Adrenal gland (tissue), 19 donors: ENCODE measurements at regions of chr16 and their contacts with region 1.

Region 1: DNA sequence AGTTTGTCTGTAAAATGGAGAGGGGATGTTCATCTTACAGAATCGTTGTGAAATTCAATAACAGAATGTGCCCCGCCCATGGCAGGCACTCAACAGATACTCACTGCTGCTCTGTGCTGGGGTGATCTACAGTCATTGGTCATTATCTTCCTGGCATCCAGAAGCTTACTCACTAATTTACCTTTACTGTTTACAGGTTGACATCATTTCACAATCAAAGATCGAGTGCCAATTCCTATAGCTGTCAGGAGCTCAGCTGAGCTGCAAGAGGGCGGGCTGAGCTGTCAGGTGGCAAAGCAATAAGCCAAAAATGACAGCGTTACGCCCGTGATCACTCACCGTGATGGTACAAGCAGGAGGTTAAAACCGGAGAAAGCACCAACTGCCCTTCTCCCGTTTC is 51.2 kb downstream of the LITAF start:
- DNase-seq: no peak
- H3K4me3 ChIP-seq: no peak overlapping the region
- H3K27ac ChIP-seq: no peak overlapping the region
- H3K4me1 ChIP-seq: no peaks in the 10 kb centered on the region
- H3K27me3 ChIP-seq: no peaks in the 10 kb centered on the region
- CTCF ChIP-seq: no peak
- POLR2A ChIP-seq: no peak

Region 2: DNA sequence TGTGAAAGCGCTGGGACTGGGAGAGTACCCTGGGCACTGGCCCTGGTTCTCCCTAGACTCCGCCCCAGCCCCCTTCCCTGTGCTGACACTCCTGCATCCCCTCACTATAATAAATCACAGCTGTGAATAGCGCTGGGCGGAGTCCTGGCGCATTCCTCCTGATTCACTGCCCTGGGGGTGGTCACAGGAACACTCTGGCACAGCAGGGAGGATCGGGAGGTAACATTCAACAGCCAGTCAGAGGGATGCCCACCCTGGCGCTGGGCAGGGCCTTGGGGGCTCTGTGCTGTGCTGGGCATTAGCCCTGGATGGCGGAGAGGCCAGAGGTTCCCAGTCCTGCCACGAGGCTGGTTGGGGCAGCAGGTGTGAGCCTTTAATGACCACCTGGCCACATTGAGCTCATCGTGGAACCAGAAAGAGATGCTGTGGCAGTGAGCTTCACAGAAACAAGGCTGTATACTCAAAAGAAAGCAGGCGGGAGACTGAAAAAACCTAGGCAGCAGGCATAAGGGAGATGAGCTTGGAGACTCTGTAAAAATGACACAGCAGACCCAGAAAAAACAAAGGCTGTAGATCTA is 144.5 kb before region 1 on chr16:
- intact Hi-C with region 1: loop called in 1 of 2 experiments (anchors 5 kb)
- DNase-seq: no peak
- H3K4me3 ChIP-seq: no peak overlapping the region
- H3K27ac ChIP-seq: no peak overlapping the region
- H3K4me1 ChIP-seq: no peaks in the 10 kb centered on the region
- H3K27me3 ChIP-seq: no peaks in the 10 kb centered on the region
- CTCF ChIP-seq: no peak
- POLR2A ChIP-seq: no peak

Region 3: DNA sequence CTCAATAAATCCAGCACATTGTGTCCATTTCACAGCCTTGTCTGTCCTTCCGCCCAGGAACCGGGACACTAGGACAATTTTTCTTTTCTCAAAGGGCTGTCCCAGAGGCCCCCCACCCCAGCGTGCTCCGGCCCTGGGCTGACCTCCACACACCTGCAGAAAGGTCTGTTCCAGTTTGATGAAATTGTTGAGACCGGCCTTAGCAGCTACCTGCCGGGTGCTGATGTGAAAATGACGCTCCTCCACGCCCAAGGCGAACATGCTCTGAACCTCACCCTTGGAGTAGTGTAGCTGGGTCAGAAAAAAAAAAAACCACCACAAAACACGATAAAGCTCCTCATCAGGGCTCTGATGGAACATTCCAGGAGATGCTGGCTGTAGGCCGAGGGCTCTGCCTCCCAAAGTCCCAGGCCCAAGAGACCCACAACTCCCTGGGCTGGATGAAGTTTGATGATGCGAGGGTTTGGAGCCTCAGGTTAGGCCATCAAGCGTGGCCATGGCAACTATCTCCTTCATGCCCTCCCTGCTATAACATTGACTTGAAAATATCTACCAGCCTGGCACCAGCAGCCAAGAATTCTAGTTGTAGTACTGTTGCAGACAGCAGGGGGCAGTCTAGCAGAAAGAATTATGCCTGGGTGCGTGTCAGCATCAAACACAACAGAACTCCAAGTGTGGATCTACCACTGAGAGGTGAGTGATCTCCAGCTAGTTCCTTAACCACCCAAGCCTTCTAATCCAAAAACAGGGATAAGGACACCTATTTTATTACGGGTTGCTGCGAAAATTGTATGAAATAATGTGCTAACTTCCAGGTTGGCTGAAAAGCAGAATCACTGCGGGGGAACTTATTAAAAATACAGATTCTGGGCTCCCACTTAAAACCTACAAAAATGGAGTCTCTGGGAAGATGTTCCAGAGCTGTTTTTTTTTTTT is 128.2 kb before region 1 on chr16:
- intact Hi-C with region 1: loop called in 1 of 2 experiments (anchors 5 kb)
- DNase-seq: peak; percentile 55 to 90 (median 72)
- H3K4me3 ChIP-seq: no peak overlapping the region
- H3K27ac ChIP-seq: no peak overlapping the region
- H3K4me1 ChIP-seq: peaks cover 0 to 5% of the 10 kb centered on the region in 2 donors
- H3K27me3 ChIP-seq: no peaks in the 10 kb centered on the region
- CTCF ChIP-seq: peak; percentile 66 to 86 (median 80)
- POLR2A ChIP-seq: no peak

Region 4: DNA sequence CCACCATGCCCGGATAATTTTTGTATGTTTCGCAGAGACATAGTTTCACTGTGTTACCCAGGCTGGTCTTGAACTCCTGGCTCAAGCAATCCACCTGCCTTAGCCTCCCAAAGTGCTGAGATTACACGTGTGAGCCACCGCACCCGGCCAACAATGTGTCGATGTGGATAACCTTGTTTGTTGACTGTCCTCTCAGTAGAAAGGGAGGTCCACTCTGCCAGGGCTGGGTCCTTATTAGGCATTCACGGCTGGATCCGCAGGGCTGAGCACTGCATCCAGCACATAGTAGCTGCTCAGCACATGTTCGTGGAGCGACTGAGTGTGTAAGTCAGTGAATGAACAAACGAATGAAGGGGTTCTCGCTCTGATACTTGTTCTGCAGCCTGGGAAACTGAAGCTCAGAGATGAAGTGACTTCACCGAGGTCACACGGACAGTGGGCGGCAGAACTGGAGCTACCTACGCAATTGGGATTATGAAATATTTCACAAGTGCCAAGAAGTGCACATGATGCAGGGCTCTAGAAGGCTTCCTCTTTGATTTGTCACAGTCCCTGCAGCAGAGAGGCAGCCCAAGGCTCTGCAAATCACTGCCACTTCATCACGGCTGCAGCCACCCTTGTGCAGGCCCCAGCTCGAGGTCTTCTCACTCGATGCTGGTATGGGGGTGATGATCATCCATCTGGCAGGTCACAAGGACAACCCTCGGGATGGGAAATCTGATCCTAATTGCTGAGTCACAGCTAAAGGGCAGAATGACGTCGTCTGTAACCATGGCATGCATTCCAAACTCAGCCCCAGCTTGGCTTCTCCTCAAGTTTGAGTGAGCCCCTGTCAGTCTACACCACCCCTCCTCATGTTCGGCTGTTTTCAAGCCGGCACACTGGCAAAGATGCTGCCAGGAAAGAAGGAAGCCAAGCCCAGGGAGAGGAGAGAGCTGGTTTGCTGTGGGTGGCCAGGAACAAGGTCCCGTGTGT is 104.7 kb after region 1 on chr16:
- intact Hi-C with region 1: loop called in 1 of 2 experiments (anchors 2 kb)
- DNase-seq: peak; percentile 88 to 98 (median 96)
- H3K4me3 ChIP-seq: no peak overlapping the region
- H3K27ac ChIP-seq: peak overlapping the region; percentile 77 to 96 (median 90)
- H3K4me1 ChIP-seq: peaks cover 10 to 17% of the 10 kb centered on the region in 2 donors
- H3K27me3 ChIP-seq: no peaks in the 10 kb centered on the region
- CTCF ChIP-seq: no peak
- POLR2A ChIP-seq: peak in 1 of 2 donors; percentile 81

Region 5: DNA sequence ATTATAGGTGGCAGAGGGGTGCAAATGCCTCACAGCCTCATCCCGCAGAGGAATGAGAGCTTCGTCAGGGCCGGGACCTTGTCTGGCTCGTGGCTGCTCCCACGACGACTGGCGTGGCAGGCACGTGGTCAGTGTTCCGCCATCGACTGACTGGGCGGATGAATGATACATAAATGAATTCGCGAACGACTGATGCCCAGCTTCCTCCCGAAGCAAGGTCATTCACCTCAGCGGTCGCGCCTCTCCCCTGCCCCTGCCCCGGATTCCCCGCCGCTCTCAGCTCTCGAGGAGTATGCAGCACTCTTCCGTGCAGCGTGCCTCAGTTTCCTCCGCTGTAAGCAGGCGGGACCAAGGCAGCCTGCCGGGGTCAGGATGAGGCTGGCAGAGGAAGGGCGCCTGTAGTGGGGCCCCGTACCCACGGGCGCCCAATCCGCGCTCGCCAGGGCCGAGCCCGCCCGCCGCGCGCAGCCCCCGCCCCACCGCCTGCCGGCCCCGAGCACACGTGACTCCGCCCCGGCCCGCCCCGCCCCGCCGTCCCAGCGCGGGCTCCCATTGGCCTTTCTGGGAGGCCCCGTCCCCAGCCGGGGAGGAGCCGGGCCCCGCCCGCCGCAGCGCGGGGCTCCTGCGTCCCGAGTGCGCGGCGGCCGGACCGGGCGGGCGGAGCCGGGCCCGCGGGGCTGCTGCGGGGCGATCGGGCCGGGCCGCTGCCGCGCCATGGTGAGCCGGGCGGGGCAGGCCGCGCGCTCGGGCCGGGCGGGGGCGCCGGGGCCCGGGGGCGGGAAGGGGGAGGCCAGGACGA is 132.6 kb after region 1 on chr16 and contains the start of gene SNN:
- intact Hi-C with region 1: no loop called
- DNase-seq: peak; percentile 85 to 93 (median 89)
- H3K4me3 ChIP-seq: peak within 1 kb of the TSS; percentile 22 to 95 (median 57)
- H3K27ac ChIP-seq: peak within 1 kb of the TSS; percentile 60 to 89 (median 84)
- H3K4me1 ChIP-seq: peaks cover 26 to 37% of the 10 kb centered on the region in 2 donors
- H3K27me3 ChIP-seq: no peaks in the 10 kb centered on the region
- CTCF ChIP-seq: no peak
- POLR2A ChIP-seq: peak; percentile 41 to 59
- total RNA-seq, gene SNN: 29.5 to 94.7 (median 40.9) TPM

Region 6: GRCh38 chr16:11715246-11715947 is 179.9 kb after region 1 on chr16:
- intact Hi-C with region 1: loop called in 1 of 2 experiments (anchors 10 kb)
- DNase-seq: no peak
- H3K4me3 ChIP-seq: no peak overlapping the region
- H3K27ac ChIP-seq: no peak overlapping the region
- H3K4me1 ChIP-seq: peaks cover 0 to 3% of the 10 kb centered on the region in 2 donors
- H3K27me3 ChIP-seq: no peaks in the 10 kb centered on the region
- CTCF ChIP-seq: no peak
- POLR2A ChIP-seq: no peak

Region 7: GRCh38 chr16:11806721-11807120 is 271.2 kb after region 1 on chr16:
- intact Hi-C with region 1: loop called in 1 of 2 experiments (anchors 5 kb)
- DNase-seq: no peak
- H3K4me3 ChIP-seq: no peak overlapping the region
- H3K27ac ChIP-seq: no peak overlapping the region
- H3K4me1 ChIP-seq: no peaks in the 10 kb centered on the region
- H3K27me3 ChIP-seq: no peaks in the 10 kb centered on the region
- CTCF ChIP-seq: no peak
- POLR2A ChIP-seq: no peak